ENCODE measurements at regions of chr15 and their contacts with region 1.

Region 1: GRCh38 chr15:66196602-66197001 is 56.9 kb downstream of the MEGF11 start:
- DNase-seq: peak; percentile 96
- H3K4me3 ChIP-seq: no peak overlapping the region
- H3K27ac ChIP-seq: peak overlapping the region; percentile 77
- H3K4me1 ChIP-seq: peaks cover 18% of the 10 kb centered on the region
- H3K27me3 ChIP-seq: no peaks in the 10 kb centered on the region
- CTCF ChIP-seq: no peak

Region 2: DNA sequence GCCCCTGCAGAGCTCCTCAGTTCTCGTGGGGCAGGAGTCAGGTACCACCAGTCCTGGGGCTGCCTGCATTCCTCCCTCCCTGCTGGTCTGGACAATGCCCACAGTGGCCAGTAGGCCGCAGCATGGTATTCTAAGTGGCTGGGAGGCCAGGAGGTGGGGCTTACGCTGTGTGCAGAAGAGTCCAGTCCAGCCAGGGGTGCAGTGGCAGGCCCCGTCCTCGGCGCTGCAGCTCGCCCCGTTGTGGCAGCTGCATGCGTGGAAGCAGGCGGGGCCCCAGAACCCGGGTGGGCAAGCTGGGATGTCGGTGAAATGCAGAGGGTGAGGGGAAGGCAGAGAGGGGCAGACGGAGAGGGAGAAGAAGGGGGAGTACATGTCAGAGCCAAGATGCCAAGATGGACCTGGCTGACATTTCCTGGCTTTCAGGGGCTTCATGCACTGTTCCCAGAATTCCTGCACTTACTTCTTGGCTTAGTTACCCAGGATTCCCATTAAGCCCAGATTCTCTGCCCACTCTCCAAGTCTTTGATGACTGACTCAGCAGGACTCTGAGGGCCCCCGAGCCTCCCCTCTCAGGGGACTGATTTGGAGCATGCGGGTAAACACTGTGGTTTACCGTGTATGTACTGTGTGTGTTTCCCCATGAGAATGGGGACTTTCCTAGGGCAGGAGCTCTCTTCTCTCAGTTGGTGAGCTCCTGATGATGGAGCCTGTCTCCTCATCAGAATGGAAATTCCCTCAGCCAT is 279.8 kb before region 1 on chr15:
- CTCF ChIA-PET with region 1: no interaction called
- dilution Hi-C with region 1: no loop called
- in situ Hi-C with region 1: no loop called
- intact Hi-C with region 1: loop called (anchors 10 kb)
- DNase-seq: peak; percentile 27
- H3K4me3 ChIP-seq: no peak overlapping the region
- H3K27ac ChIP-seq: no peak overlapping the region
- H3K4me1 ChIP-seq: no peaks in the 10 kb centered on the region
- H3K27me3 ChIP-seq: no peaks in the 10 kb centered on the region
- CTCF ChIP-seq: peak; percentile 66 to 74

Region 3: GRCh38 chr15:66004618-66005262 is 191.9 kb before region 1 on chr15:
- CTCF ChIA-PET with region 1: no interaction called
- dilution Hi-C with region 1: no loop called
- in situ Hi-C with region 1: no loop called
- intact Hi-C with region 1: loop called (anchors 5 kb)
- DNase-seq: peak; percentile 19
- H3K4me3 ChIP-seq: no peak overlapping the region
- H3K27ac ChIP-seq: no peak overlapping the region
- H3K4me1 ChIP-seq: no peaks in the 10 kb centered on the region
- H3K27me3 ChIP-seq: peaks cover 3% of the 10 kb centered on the region
- CTCF ChIP-seq: no peak

Region 4: DNA sequence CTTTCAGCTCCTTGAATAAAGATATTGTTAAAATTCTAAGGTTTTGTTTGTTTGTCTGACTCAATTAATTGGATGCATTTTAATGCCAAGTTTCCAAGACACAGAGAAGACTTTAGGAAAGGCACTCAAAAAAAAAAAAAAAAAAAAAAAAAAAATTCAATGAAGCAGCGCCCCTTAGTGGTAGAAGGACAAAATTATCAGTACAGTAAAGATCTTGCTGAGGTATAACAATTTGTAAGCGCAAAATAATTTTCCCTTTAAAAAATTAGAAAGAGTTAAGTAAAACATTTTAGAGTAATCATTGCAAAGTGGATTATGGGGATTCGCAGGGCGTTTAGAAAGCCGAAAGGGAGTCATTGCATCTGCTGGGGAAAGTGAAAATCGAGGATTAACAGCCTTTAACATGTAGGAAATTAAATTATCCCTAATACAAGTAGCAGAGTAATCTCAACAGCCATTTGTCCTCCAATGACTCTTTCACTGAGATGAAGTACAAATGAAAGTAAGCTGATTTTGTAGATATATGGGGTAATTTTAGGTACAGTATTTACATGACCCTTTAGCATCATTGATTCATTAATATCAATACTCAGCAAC is 91.0 kb after region 1 on chr15:
- CTCF ChIA-PET with region 1: no interaction called
- dilution Hi-C with region 1: no loop called
- in situ Hi-C with region 1: no loop called
- intact Hi-C with region 1: loop called (anchors 10 kb)
- DNase-seq: peak; percentile 14
- H3K4me3 ChIP-seq: no peak overlapping the region
- H3K27ac ChIP-seq: no peak overlapping the region
- H3K4me1 ChIP-seq: peaks cover 7% of the 10 kb centered on the region
- H3K27me3 ChIP-seq: no peaks in the 10 kb centered on the region
- CTCF ChIP-seq: peak; percentile 56 to 61